ENCODE measurements at regions of chr20 and their contacts with region 1.

Region 1: DNA sequence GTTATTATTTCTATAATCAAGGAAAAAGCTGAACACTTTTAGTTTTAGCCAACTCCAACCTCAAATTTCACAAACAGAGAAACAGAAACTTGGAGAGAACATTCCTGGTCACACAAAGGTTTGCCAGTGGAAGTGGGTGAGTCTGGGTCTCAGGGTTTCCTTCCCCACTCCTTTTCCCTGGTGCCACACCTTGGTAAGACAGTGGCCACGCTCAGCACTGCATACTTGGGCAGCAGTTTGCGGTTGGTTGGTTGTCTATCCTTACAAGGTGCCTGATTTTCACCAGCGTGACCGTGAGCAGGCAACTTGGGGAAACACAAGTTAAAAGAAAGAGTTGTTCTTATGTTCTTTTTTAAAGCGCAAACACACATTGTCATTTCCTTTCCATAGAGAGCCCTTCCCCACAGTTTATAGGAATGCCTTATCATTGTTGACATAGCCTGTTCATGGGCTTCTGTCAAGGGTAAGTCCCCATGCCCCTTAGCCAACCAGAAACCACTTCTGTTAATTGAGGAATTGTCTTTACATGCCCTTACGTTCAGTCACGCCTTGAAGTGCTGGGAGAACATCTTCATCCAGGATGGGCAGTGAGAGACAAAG is 82.2 kb downstream of the RIN2 start:
- DNase-seq: no peak
- H3K4me3 ChIP-seq: no peak overlapping the region
- H3K27ac ChIP-seq: no peak overlapping the region
- H3K4me1 ChIP-seq: peaks cover 7 to 12% (median 10%) of the 10 kb centered on the region in 4 donors
- H3K27me3 ChIP-seq: no peaks in the 10 kb centered on the region
- CTCF ChIP-seq: no peak
- EP300 ChIP-seq: no peak
- POLR2A ChIP-seq: no peak

Region 2: GRCh38 chr20:19661717-19662636 is 178.2 kb before region 1 on chr20:
- intact Hi-C with region 1: no loop called
- DNase-seq: peak; percentile 94
- H3K4me3 ChIP-seq: no peak overlapping the region
- H3K27ac ChIP-seq: no peak overlapping the region
- H3K4me1 ChIP-seq: peaks cover 4 to 8% (median 6%) of the 10 kb centered on the region in 4 donors
- H3K27me3 ChIP-seq: no peaks in the 10 kb centered on the region
- CTCF ChIP-seq: peak; percentile 96 to 99 (median 98)
- EP300 ChIP-seq: no peak
- POLR2A ChIP-seq: no peak

Region 3: GRCh38 chr20:19875331-19876221 is 35.4 kb after region 1 on chr20:
- intact Hi-C with region 1: loop called (anchors 5 kb)
- DNase-seq: no peak
- H3K4me3 ChIP-seq: peak overlapping the region in 1 of 4 donors; percentile 7
- H3K27ac ChIP-seq: peak overlapping the region; percentile 44 to 66 (median 60)
- H3K4me1 ChIP-seq: peaks cover 0 to 21% (median 16%) of the 10 kb centered on the region in 4 donors
- H3K27me3 ChIP-seq: no peaks in the 10 kb centered on the region
- CTCF ChIP-seq: no peak
- EP300 ChIP-seq: no peak
- POLR2A ChIP-seq: no peak